Vagina (tissue), 2 donors: ENCODE measurements at regions of chr10 and their contacts with region 1.

Region 1: DNA sequence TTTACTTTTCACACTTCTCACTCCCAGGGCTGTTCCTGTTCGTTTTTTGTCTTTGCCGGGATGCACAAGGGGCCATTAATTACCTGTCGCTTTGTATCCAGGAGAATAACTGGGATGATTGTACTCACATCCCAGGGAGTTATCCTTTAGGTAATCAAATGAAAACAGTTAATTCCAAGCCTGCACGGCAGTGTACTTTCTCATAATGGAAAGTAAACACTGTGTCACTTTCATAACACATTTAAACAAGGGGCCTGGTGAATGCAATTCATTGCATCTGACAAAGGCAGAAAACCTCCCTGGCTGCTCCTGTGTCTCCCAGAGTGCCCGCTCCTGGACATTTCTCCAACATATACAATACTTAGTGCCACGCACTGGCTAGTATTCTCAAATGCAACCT is 138.7 kb upstream of the CELF2 start:
- DNase-seq: no peak
- H3K4me3 ChIP-seq: no peak overlapping the region
- H3K27ac ChIP-seq: no peak overlapping the region
- H3K4me1 ChIP-seq: no peaks in the 10 kb centered on the region
- H3K27me3 ChIP-seq: no peaks in the 10 kb centered on the region
- CTCF ChIP-seq: no peak
- POLR2A ChIP-seq: no peak

Region 2: DNA sequence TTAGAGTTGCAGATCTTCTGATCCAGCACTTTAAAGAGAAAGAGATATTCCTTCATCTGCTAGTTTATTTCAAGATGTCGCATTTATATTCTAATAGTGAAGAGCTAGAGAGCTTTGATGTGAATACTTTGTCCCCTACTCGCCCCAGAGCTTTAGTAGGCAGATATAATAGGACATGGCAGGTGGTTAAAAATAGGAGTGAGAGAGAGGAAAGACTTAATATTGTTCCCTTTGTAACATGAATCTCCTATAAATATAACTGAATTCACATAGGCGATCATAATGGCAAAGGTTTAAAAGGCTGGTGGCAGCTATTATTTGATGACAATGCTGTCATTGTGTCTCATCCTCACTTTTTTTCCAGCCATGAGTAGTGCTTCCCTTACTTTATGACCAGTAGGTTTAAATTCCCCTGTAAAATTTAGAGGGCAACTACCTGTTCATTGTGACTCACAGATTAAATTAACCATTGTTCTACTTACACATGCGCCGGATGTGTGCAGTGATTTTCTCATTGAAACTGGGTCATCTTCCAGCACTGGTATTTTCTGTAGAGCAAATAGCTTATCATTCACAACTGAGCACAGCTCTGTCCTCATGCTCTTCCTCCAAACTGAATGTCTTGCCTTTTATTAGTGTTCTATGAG is 768.0 kb before region 1 on chr10:
- intact Hi-C with region 1: no loop called
- DNase-seq: no peak
- H3K4me3 ChIP-seq: no peak overlapping the region
- H3K27ac ChIP-seq: no peak overlapping the region
- H3K4me1 ChIP-seq: no peaks in the 10 kb centered on the region
- H3K27me3 ChIP-seq: no peaks in the 10 kb centered on the region
- CTCF ChIP-seq: no peak
- POLR2A ChIP-seq: no peak

Region 3: DNA sequence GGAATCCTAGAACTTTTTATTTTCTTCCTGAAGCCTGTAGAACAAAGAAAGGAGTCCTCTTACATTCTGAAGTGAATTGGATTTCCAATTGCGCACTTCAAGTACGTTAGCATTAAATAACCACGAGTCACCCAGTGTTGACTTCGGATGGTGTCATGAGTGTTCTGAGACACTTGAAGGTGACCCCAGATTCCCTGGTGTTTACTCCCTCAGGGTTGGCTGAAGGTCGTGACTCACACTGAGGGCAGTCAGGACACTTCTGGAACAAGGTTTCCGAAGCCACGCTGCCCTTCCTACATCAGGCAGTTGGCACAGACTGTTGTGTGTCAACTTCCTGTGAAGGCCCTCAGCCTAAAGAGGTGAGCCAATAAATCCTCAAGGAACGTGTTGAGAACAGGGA is 47.9 kb before region 1 on chr10:
- intact Hi-C with region 1: loop called (anchors 5 kb)
- DNase-seq: no peak
- H3K4me3 ChIP-seq: no peak overlapping the region
- H3K27ac ChIP-seq: peak overlapping the region; percentile 35
- H3K4me1 ChIP-seq: no peaks in the 10 kb centered on the region
- H3K27me3 ChIP-seq: no peaks in the 10 kb centered on the region
- CTCF ChIP-seq: no peak
- POLR2A ChIP-seq: no peak